Mammary epithelial cell (primary cell): ENCODE measurements at regions of chr18 and their contacts with region 1.

Region 1: DNA sequence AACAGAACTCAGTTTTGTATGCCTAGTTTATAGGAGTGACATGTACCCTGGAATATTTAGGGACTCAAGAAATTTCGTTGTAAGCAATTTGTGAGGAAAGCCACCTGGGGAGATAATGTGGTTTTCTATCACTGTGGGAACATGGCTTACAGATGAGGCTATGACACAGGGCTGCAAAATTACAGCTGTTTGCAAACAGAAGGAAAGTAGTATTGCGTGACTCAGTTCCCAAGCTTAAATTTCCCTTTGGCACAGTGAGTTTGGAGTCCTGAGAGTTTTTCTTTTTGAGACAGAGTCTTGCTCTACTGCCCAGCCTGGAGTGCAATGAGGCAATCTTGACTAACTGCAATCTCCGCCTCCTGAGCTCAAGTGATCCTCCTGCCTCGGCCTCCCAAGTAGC is 149.8 kb downstream of the MYO5B start:
- DNase-seq: no peak
- H3K4me3 ChIP-seq: no peak overlapping the region
- H3K27ac ChIP-seq: no peak overlapping the region
- H3K4me1 ChIP-seq: no peaks in the 10 kb centered on the region
- H3K27me3 ChIP-seq: no peaks in the 10 kb centered on the region
- CTCF ChIP-seq: no peak

Region 2: DNA sequence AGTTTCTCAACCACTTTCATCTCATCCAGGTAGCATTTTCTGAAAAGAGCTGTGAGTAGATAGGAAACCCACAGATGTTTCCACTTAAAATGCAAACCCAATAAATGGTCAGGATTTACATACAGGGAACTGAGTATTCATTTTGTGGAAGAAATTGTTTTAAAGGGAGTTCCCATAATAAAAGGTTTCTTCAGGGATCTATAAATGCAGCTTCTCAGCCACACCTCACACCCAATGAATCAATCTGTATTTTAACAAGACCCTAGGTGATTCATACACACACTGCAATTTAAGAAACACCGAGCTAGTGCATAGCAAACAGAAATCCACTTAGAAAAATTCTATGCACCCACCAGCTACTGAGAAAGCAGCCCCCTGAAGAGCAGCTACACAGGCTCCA is 91.7 kb before region 1 on chr18:
- CTCF ChIA-PET with region 1: no interaction called
- dilution Hi-C with region 1: no loop called
- in situ Hi-C with region 1: no loop called
- intact Hi-C with region 1: no loop called
- DNase-seq: no peak
- H3K4me3 ChIP-seq: no peak overlapping the region
- H3K27ac ChIP-seq: no peak overlapping the region
- H3K4me1 ChIP-seq: peaks cover 3% of the 10 kb centered on the region
- H3K27me3 ChIP-seq: no peaks in the 10 kb centered on the region
- CTCF ChIP-seq: no peak

Region 3: GRCh38 chr18:49967171-49967570 is 78.0 kb before region 1 on chr18:
- CTCF ChIA-PET with region 1: no interaction called
- dilution Hi-C with region 1: no loop called
- in situ Hi-C with region 1: no loop called
- intact Hi-C with region 1: no loop called
- DNase-seq: no peak
- H3K4me3 ChIP-seq: no peak overlapping the region
- H3K27ac ChIP-seq: no peak overlapping the region
- H3K4me1 ChIP-seq: no peaks in the 10 kb centered on the region
- H3K27me3 ChIP-seq: no peaks in the 10 kb centered on the region
- CTCF ChIP-seq: no peak

Region 4: GRCh38 chr18:50151926-50152325 is 106.8 kb after region 1 on chr18:
- CTCF ChIA-PET with region 1: no interaction called
- dilution Hi-C with region 1: loop called (anchors 5 kb)
- in situ Hi-C with region 1: no loop called
- intact Hi-C with region 1: no loop called
- DNase-seq: peak; percentile 78
- H3K4me3 ChIP-seq: no peak overlapping the region
- H3K27ac ChIP-seq: no peak overlapping the region
- H3K4me1 ChIP-seq: peaks cover 20% of the 10 kb centered on the region
- H3K27me3 ChIP-seq: no peaks in the 10 kb centered on the region
- CTCF ChIP-seq: no peak